Pancreas (tissue), 10 donors: ENCODE measurements at regions of chr10 and their contacts with region 1.

Region 1: GRCh38 chr10:77641788-77642397 is 4.3 kb upstream of the KCNMA1 start:
- DNase-seq: peak in 4 of 6 donors; percentile 43 to 75 (median 62)
- ATAC-seq: peak; percentile 53 to 69 (median 64)
- H3K4me3 ChIP-seq: no peak overlapping the region
- H3K27ac ChIP-seq: no peak overlapping the region
- H3K4me1 ChIP-seq: no peaks in the 10 kb centered on the region
- H3K27me3 ChIP-seq: no peaks in the 10 kb centered on the region
- CTCF ChIP-seq: peak; percentile 52 to 78 (median 68)

Region 2: DNA sequence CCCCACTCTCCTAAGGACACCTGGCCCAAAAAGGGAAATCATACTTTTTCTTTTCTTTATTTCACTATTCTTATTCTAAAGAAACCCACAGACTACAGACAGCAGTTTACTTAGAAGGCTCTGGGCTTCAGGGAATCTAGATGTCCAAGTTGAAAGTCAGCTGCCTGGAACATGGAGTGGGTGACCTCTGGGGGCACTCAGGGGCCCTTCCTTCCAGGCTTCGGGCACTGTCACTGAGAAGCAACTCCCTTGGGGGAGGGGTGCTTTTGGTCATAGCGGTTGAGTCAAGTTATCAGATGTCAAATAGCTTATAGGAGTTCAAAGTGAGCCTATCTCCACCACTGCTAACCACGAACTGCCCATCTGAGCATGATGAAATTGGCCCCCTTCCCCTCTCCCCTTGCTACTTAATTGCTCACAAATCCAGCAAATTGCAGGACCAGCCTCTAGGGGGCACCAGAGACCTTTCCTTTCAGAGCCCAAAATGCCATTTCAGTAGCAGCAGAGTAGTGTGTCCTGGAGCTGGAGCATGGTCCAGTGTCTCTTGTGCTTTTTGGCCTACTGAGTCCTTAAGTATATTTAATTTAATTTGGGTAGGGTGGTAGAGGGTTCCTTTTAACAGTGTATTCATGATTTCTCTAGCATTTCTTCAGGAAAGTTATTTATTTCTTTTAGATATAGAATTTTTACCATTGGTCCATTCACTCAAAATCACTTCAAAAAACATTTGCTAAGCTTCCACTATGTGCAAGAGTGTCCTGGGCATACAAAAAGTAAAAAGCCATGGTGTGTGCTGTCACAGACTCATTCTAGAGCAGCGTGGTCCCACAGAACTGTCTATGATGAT is 468.1 kb before region 1 on chr10:
- intact Hi-C with region 1: loop called (anchors 5 to 10 kb)
- DNase-seq: peak; percentile 50 to 83 (median 70)
- ATAC-seq: peak; percentile 71 to 98 (median 93)
- H3K4me3 ChIP-seq: no peak overlapping the region
- H3K27ac ChIP-seq: no peak overlapping the region
- H3K4me1 ChIP-seq: no peaks in the 10 kb centered on the region
- H3K27me3 ChIP-seq: no peaks in the 10 kb centered on the region
- CTCF ChIP-seq: peak; percentile 66 to 88 (median 82)

Region 3: DNA sequence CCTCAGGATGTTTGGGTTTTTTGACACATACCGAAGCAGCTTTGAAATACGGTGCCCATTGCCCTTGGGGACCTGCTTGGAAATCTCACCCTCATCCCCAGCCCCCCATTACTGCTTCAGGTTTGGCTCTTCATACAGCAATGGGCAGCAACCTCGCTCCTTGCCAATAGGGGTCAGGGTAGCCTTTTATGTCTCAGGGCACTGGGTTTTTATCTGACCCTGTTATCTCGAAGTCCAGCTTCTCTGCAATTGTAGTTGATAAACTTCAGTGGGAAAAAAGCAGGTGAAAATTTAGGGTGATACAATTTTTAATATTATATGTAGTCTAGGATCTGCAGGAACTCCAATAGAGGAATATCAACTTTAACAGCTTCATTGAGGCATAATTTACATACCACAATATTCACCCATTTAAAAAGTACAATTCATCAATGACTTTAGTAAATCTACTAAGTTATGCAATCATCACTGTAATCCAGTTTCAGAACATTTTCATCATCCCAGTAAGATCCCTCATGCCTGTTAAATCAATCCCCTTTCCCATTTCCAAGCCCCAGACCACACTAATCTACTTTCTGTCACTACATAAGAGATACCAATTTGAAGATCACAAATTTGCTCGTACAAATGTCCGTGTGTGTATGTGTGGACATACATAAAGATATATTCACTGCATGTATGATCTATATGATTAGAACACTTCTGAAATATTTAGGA is 390.4 kb before region 1 on chr10:
- intact Hi-C with region 1: loop called in 1 of 3 experiments (anchors 5 kb)
- DNase-seq: peak in 2 of 6 donors; percentile 31 to 33
- ATAC-seq: peak; percentile 55 to 82 (median 79)
- H3K4me3 ChIP-seq: no peak overlapping the region
- H3K27ac ChIP-seq: no peak overlapping the region
- H3K4me1 ChIP-seq: peaks cover 0 to 15% (median 5%) of the 10 kb centered on the region in 3 donors
- H3K27me3 ChIP-seq: no peaks in the 10 kb centered on the region
- CTCF ChIP-seq: peak; percentile 19 to 41 (median 27)

Region 4: GRCh38 chr10:77391605-77392235 is 250.2 kb before region 1 on chr10:
- intact Hi-C with region 1: loop called in 1 of 3 experiments (anchors 5 kb)
- DNase-seq: peak; percentile 73 to 91 (median 78)
- ATAC-seq: peak; percentile 71 to 80 (median 74)
- H3K4me3 ChIP-seq: no peak overlapping the region
- H3K27ac ChIP-seq: peak overlapping the region in 1 of 4 donors; percentile 66
- H3K4me1 ChIP-seq: peaks cover 16 to 34% (median 23%) of the 10 kb centered on the region in 3 donors
- H3K27me3 ChIP-seq: no peaks in the 10 kb centered on the region
- CTCF ChIP-seq: peak in 3 of 4 donors; percentile 29 to 35 (median 34)

Region 5: GRCh38 chr10:77846718-77847630 is 205.1 kb after region 1 on chr10:
- intact Hi-C with region 1: no loop called
- DNase-seq: peak; percentile 54 to 93 (median 78)
- ATAC-seq: peak; percentile 90 to 96 (median 92)
- H3K4me3 ChIP-seq: no peak overlapping the region
- H3K27ac ChIP-seq: no peak overlapping the region
- H3K4me1 ChIP-seq: peaks cover 0 to 2% (median 0%) of the 10 kb centered on the region in 3 donors
- H3K27me3 ChIP-seq: no peaks in the 10 kb centered on the region
- CTCF ChIP-seq: peak; percentile 86 to 98 (median 95)